ENCODE measurements at regions of chr13 and their contacts with region 1.

Region 1: DNA sequence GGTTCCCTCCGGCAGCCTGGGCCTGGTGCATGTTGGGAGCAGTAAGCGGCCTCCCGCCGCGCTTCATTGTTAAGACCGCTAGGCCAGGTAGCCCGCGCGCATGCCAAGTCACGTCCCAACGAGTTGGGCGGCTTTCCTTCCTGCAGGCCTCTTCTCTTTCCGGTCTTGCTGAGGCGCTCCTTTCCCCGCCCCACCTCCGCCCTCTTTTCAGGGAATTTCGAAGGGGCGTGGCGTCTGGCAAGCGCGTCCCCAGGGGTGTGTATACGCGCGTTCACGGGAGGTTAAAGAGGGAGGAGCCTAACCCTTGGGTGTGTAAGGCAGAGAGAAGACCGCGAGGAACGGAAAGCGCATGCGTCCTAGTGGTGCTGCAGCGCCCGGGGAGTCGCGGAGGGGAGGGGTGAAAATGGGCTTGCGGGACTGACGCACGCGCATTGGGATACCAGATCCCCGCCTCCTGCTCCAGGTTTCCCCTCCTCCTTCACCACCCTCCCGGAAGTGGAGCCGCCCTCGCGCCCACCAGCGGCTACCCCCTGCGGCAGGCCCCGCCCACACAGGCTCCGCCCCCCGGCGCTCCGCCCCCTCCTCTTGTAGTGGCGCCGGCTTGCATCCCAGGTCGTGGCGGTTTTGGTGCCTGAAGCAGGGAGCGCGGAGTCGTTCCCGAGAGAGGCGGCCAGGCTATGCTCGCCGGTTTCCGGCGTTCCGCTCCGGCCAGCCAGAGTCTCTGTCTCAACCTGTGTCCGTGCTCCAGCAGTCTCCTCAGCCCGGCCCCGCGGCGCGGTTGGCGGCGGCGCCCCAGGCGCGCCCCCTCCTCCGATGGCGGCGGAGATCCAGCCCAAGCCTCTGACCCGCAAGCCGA is at the start of gene WDFY2:
- DNase-seq: peak; percentile 99 to 100 (median 100)
- ATAC-seq: peak; percentile 92
- H3K4me3 ChIP-seq: peak within 1 kb of the TSS; percentile 95
- H3K4me3 Mint-ChIP-seq: peak within 1 kb of the TSS; percentile 85 to 100 (median 98)
- H3K27ac ChIP-seq: peak within 1 kb of the TSS; percentile 88
- H3K27ac Mint-ChIP-seq: peak within 1 kb of the TSS; percentile 95 to 100 (median 98)
- H3K4me1 ChIP-seq: peaks cover 12 to 17% of the 10 kb centered on the region in 2 donors
- H3K4me1 Mint-ChIP-seq: peaks cover 26 to 47% (median 35%) of the 10 kb centered on the region in 7 donors
- H3K27me3 ChIP-seq: no peaks in the 10 kb centered on the region
- H3K27me3 Mint-ChIP-seq: peaks cover 0 to 3% (median 0%) of the 10 kb centered on the region in 5 donors
- total RNA-seq, gene WDFY2: 13.3 to 44.3 (median 21.1) TPM

Region 2: DNA sequence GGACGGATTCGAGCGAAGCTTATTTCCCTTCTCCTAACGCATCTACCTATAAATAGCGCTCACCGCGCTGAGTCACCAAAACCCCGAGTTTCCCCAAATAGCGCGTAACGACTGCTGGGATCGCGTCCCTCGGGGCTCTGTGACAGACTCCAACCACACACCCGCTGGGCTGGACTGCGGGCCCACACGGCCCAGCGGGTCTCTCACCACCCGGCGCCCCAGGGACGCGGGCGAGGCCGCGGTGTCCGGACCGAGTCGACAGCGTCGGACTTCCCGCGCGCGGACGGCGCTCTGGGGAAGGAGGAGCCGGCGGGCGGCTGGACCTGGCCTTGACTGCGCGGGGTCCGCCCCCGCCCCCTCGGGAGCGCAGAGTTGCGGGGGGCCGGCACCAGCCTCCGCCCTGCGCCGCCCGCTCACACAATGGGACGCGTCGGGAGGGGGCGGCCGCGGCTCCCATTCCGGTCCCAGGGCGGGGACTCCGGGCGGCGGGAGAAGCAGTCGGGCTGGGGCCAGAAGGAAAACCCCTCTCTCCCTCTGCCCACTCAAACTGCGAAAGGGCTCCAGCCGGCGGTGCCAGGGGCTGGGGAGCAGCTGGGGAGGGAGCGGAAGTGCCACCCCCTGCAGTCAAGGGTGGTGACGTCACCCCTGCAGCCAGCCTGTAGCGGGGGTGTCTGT is 1460.1 kb before region 1 on chr13:
- CTCF ChIA-PET with region 1: no interaction called
- POLR2A ChIA-PET with region 1: no interaction called
- intact Hi-C with region 1: loop called (anchors 2 kb)
- DNase-seq: peak in 7 of 9 donors; percentile 46 to 88 (median 64)
- ATAC-seq: peak; percentile 82
- H3K4me3 ChIP-seq: peak overlapping the region; percentile 52
- H3K4me3 Mint-ChIP-seq: peak overlapping the region; percentile 86 to 96 (median 93)
- H3K27ac ChIP-seq: peak overlapping the region; percentile 95
- H3K27ac Mint-ChIP-seq: peak overlapping the region; percentile 90 to 99 (median 97)
- H3K4me1 ChIP-seq: peaks cover 24 to 29% of the 10 kb centered on the region in 2 donors
- H3K4me1 Mint-ChIP-seq: peaks cover 25 to 61% (median 50%) of the 10 kb centered on the region in 7 donors
- H3K27me3 ChIP-seq: peaks cover 0 to 11% of the 10 kb centered on the region in 2 donors
- H3K27me3 Mint-ChIP-seq: peaks cover 1 to 15% (median 12%) of the 10 kb centered on the region in 5 donors

Region 3: DNA sequence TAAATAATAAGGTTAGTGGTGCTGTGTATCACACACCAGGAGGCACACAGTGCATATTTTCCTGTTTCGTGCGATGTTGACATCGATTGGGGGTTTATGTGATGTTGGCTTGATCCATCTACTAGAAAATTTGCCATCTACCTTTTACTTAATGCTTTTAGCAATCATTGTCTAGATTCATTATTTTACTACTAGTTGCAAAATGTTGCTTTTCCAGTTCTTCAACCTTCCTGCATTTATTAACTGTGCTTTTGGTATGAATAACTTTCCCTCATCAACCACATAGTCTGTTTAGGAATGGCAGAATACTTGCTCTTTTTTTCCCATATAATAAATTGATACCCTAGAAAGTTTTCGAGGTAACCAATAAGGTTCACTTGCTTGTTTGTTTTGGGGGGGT is 490.5 kb before region 1 on chr13:
- CTCF ChIA-PET with region 1: no interaction called
- POLR2A ChIA-PET with region 1: no interaction called
- intact Hi-C with region 1: no loop called
- DNase-seq: no peak
- ATAC-seq: no peak
- H3K4me3 ChIP-seq: no peak overlapping the region
- H3K4me3 Mint-ChIP-seq: no peak overlapping the region
- H3K27ac ChIP-seq: no peak overlapping the region
- H3K27ac Mint-ChIP-seq: no peak overlapping the region
- H3K4me1 ChIP-seq: no peaks in the 10 kb centered on the region
- H3K4me1 Mint-ChIP-seq: peaks cover 0 to 3% (median 0%) of the 10 kb centered on the region in 7 donors
- H3K27me3 ChIP-seq: no peaks in the 10 kb centered on the region
- H3K27me3 Mint-ChIP-seq: peaks cover 6 to 50% (median 17%) of the 10 kb centered on the region in 5 donors

Region 4: GRCh38 chr13:51534041-51534817 is 49.9 kb before region 1 on chr13:
- CTCF ChIA-PET with region 1: no interaction called
- POLR2A ChIA-PET with region 1: interaction called, 4 read pairs
- intact Hi-C with region 1: loop called (anchors 2 to 5 kb)
- DNase-seq: peak in 6 of 9 donors; percentile 3 to 18 (median 10)
- ATAC-seq: peak; percentile 82
- H3K4me3 ChIP-seq: no peak overlapping the region
- H3K4me3 Mint-ChIP-seq: peak overlapping the region; percentile 38 to 79 (median 62)
- H3K27ac ChIP-seq: peak overlapping the region; percentile 40
- H3K27ac Mint-ChIP-seq: peak overlapping the region; percentile 41 to 90 (median 74)
- H3K4me1 ChIP-seq: peaks cover 22 to 24% of the 10 kb centered on the region in 2 donors
- H3K4me1 Mint-ChIP-seq: peaks cover 17 to 40% (median 25%) of the 10 kb centered on the region in 7 donors
- H3K27me3 ChIP-seq: no peaks in the 10 kb centered on the region
- H3K27me3 Mint-ChIP-seq: no peaks in the 10 kb centered on the region

Region 5: GRCh38 chr13:51645154-51645650 is 61.1 kb after region 1 on chr13:
- CTCF ChIA-PET with region 1: no interaction called
- POLR2A ChIA-PET with region 1: interaction called, 8 read pairs
- intact Hi-C with region 1: loop called (anchors 1 to 2 kb)
- DNase-seq: peak in 8 of 9 donors; percentile 29 to 80 (median 70)
- ATAC-seq: peak; percentile 92
- H3K4me3 ChIP-seq: no peak overlapping the region
- H3K4me3 Mint-ChIP-seq: peak overlapping the region; percentile 43 to 77 (median 64)
- H3K27ac ChIP-seq: peak overlapping the region; percentile 61
- H3K27ac Mint-ChIP-seq: peak overlapping the region; percentile 72 to 97 (median 92)
- H3K4me1 ChIP-seq: peaks cover 26 to 39% of the 10 kb centered on the region in 2 donors
- H3K4me1 Mint-ChIP-seq: peaks cover 37 to 57% (median 49%) of the 10 kb centered on the region in 7 donors
- H3K27me3 ChIP-seq: no peaks in the 10 kb centered on the region
- H3K27me3 Mint-ChIP-seq: no peaks in the 10 kb centered on the region

Region 6: DNA sequence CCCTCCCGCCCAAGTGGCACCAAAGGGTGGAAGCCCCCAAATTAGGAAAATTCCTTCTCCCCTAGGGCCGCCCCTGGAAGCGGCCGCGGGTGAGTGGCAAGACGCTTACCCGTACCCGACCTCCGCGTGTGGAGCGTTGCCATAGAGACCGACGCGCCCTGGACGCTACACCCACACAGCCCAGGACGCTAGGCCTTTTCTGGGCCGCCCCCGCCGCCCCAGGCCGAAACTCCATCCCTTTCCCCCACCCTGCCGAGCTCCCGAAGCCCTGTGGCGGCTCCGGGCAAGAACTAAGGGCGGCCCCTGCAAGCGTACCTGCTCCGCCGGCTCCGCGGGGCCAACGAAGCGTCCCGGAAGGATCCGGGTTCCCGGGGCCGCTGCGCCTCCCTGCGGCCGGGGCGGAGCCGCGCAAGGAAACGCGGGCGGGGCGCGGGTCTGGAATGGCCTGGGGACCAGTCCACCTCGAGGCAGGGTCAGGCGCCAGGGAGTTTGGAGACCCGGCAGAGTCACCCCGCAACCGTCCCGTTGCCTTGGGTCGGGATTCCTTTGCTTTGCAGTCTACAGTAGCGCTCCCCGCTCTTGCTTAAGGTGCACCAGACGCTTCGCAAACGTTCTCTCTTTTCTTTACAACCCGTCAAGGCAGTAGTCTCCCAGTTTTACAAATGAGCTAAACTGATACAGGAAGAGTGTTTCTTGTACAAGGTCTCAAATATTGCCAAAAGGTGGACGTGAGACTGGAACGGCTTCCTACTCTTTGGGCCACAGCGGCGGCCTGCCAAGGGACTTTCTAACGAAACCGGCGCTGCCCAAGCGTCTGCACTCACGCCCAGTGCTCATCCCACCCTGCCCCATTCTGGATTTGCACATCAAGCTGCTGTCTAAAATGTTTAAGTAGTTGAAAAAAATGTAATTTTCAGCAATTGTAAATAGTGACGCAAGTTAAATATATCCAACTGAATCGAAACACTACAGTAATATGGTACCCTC is 544.9 kb after region 1 on chr13 and contains the start of gene NEK5:
- CTCF ChIA-PET with region 1: no interaction called
- POLR2A ChIA-PET with region 1: no interaction called
- intact Hi-C with region 1: loop called in 1 of 2 experiments (anchors 1 kb)
- DNase-seq: peak; percentile 36 to 75 (median 55)
- ATAC-seq: peak; percentile 82
- H3K4me3 ChIP-seq: peak within 1 kb of the TSS; percentile 51
- H3K4me3 Mint-ChIP-seq: peak within 1 kb of the TSS; percentile 85 to 94 (median 88)
- H3K27ac ChIP-seq: no peak within 1 kb of the TSS
- H3K27ac Mint-ChIP-seq: peak within 1 kb of the TSS in 4 of 9 donors; percentile 3 to 19 (median 6)
- H3K4me1 ChIP-seq: peaks cover 11 to 13% of the 10 kb centered on the region in 2 donors
- H3K4me1 Mint-ChIP-seq: peaks cover 11 to 21% (median 18%) of the 10 kb centered on the region in 7 donors
- H3K27me3 ChIP-seq: no peaks in the 10 kb centered on the region
- H3K27me3 Mint-ChIP-seq: peaks cover 0 to 14% (median 6%) of the 10 kb centered on the region in 5 donors
- total RNA-seq, gene NEK5: not detected

Region 7: DNA sequence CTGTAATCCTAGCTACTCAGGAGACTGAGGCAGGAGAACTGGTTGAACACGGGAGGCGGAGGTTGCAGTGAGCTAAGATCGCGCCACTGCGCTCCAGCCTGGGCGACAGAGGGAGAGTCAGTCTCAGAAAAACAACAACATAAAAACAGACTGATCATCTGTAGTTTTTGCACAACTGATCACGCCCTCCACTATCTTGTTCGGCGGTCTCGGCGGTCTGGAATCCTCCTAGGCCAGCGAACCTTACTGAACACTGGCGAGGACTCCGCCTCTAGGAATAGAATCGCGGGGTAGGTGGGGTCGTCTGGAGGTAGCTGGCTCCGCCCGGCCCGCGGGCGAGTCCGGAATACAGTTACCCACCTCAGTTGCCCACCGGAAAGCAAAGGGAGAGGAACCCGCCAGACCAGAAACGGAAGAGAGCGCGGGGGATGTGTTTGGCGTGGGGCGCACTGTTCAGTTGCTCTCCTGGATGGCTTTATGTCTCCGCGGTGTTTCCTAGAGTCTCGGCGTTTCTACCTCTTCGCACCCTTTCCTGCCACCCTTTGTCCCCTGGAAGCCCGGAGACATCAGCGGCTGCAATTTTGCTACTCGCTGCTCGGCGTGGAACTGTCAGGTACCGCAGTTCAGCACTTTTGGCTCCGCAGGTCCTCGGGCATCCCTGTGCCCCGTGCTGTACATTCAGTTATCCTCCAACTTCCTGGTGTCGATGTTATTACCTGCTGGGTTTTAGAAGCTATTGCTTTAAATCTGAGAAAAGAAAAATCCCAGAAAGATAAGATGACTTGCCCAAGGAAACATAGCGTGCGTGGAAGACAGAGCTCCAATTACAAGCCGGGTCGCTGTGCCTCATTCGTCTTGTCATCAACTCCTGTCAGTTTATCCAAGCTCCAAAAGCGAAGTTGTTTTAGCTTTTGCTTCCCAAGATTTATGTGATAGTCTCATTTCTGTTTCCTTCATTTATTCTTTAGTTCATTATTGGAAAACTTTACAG is 1033.3 kb after region 1 on chr13:
- CTCF ChIA-PET with region 1: no interaction called
- POLR2A ChIA-PET with region 1: no interaction called
- intact Hi-C with region 1: loop called in 1 of 2 experiments (anchors 1 kb)
- DNase-seq: peak; percentile 61 to 85 (median 81)
- ATAC-seq: peak; percentile 97
- H3K4me3 ChIP-seq: peak overlapping the region; percentile 90
- H3K4me3 Mint-ChIP-seq: peak overlapping the region; percentile 86 to 100 (median 99)
- H3K27ac ChIP-seq: peak overlapping the region; percentile 76
- H3K27ac Mint-ChIP-seq: peak overlapping the region; percentile 95 to 97 (median 96)
- H3K4me1 ChIP-seq: peaks cover 0 to 13% of the 10 kb centered on the region in 2 donors
- H3K4me1 Mint-ChIP-seq: peaks cover 19 to 57% (median 39%) of the 10 kb centered on the region in 7 donors
- H3K27me3 ChIP-seq: no peaks in the 10 kb centered on the region
- H3K27me3 Mint-ChIP-seq: peaks cover 0 to 8% (median 0%) of the 10 kb centered on the region in 5 donors